IMR-90 (cell line): ENCODE measurements at regions of chr20 and their contacts with region 1.

Region 1: DNA sequence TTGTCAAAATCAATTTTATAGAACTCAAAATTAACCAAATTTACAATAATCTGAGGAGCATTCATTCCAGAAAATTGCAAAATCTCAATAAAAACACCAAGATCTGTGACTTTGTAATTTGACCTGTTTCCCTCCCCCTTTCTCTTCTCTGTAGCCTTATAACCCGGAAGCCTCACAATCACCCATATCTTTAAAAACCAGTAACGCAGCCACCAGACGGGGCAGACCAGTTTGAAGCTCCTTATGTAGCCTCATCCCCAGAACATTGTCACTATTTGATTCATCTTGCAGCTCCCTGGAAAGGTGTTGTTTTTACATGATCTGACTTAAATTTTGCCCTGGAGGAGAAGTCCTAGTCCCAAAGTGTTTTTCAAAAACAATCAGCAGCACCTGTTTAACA is 27.5 kb upstream of the TGM6 start:
- DNase-seq: no peak
- ATAC-seq: no peak
- H3K4me3 ChIP-seq: no peak overlapping the region
- H3K27ac ChIP-seq: no peak overlapping the region
- H3K4me1 ChIP-seq: no peaks in the 10 kb centered on the region
- H3K27me3 ChIP-seq: no peaks in the 10 kb centered on the region; the same call in 1 of the 2 replicates
- CTCF ChIP-seq: no peak
- POLR2A ChIP-seq: no peak
- RAD21 ChIP-seq: no peak

Region 2: DNA sequence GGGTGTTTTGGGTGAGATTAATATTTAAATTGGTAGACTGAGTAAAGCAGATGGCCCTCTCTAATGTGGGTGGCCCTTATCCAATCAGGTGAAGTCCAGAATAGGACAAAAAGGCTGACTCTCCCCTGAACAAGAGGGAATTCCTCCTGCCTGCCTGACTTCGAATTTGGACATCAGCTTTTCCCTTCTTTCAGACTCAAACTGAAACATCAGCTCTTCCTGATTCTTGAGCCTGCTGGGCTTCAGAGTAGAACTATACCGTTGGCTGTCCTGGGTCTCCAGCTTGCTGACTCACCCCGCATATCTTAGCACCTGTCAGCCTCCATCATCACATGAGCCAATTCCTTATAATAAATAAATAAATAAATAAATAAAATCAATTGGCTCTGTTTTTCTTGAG is 12.4 kb after region 1 on chr20:
- CTCF ChIA-PET with region 1: interaction called, 3 read pairs
- POLR2A ChIA-PET with region 1: interaction called, 26 read pairs
- dilution Hi-C with region 1: no loop called
- in situ Hi-C with region 1: no loop called
- intact Hi-C with region 1: no loop called
- DNase-seq: no peak
- ATAC-seq: no peak
- H3K4me3 ChIP-seq: no peak overlapping the region
- H3K27ac ChIP-seq: no peak overlapping the region
- H3K4me1 ChIP-seq: no peaks in the 10 kb centered on the region
- H3K27me3 ChIP-seq: no peaks in the 10 kb centered on the region; the same call in 1 of the 2 replicates
- CTCF ChIP-seq: no peak
- POLR2A ChIP-seq: no peak
- RAD21 ChIP-seq: no peak

Region 3: DNA sequence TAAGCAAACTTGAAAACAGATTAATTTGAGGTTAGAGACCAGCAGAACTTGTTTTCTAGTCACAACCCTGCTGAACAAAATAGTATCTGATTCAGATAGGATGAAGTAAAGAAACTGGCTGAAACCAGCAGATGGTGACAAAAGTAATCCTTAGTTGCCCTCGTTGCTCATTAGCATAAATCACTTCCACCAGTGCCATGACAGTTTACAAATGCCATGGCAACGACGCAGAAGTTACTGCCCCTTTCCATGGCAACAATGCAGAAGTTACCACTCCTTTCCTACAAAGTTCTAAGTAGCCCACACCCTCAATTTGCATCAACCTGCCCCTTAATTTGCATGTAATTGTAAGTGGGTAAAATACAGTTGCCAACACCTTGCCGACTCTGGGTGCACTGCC is 93.6 kb after region 1 on chr20:
- CTCF ChIA-PET with region 1: no interaction called
- POLR2A ChIA-PET with region 1: no interaction called
- dilution Hi-C with region 1: no loop called
- in situ Hi-C with region 1: no loop called
- intact Hi-C with region 1: loop called (anchors 2 kb)
- DNase-seq: no peak
- ATAC-seq: no peak
- H3K4me3 ChIP-seq: no peak overlapping the region
- H3K27ac ChIP-seq: no peak overlapping the region
- H3K4me1 ChIP-seq: no peaks in the 10 kb centered on the region
- H3K27me3 ChIP-seq: no peaks in the 10 kb centered on the region
- CTCF ChIP-seq: no peak
- POLR2A ChIP-seq: no peak
- RAD21 ChIP-seq: no peak